Adrenal gland (tissue), 19 donors: ENCODE measurements at regions of chr19 and their contacts with region 1.

Region 1: GRCh38 chr19:6218491-6219162 is 61.1 kb downstream of the MLLT1 start:
- DNase-seq: peak; percentile 89 to 97 (median 90)
- H3K4me3 ChIP-seq: no peak overlapping the region
- H3K27ac ChIP-seq: no peak overlapping the region
- H3K4me1 ChIP-seq: peaks cover 34 to 51% of the 10 kb centered on the region in 2 donors
- H3K27me3 ChIP-seq: no peaks in the 10 kb centered on the region
- CTCF ChIP-seq: peak; percentile 96 to 99 (median 98)
- POLR2A ChIP-seq: no peak

Region 2: GRCh38 chr19:6279931-6280591 is 61.4 kb after region 1 on chr19 and contains the start of gene MLLT1:
- intact Hi-C with region 1: loop called in 1 of 2 experiments (anchors 5 kb)
- DNase-seq: peak; percentile 97 to 99 (median 98)
- H3K4me3 ChIP-seq: peak within 1 kb of the TSS; percentile 56 to 97 (median 71)
- H3K27ac ChIP-seq: peak within 1 kb of the TSS; percentile 4 to 95 (median 79)
- H3K4me1 ChIP-seq: peaks cover 0 to 40% of the 10 kb centered on the region in 2 donors
- H3K27me3 ChIP-seq: no peaks in the 10 kb centered on the region
- CTCF ChIP-seq: peak in 5 of 6 experiments; percentile 33 to 77 (median 52)
- POLR2A ChIP-seq: peak in 1 of 2 donors; percentile 42
- total RNA-seq, gene MLLT1: 9.3 to 66.3 (median 22.8) TPM

Region 3: GRCh38 chr19:6297202-6297601 is 78.6 kb after region 1 on chr19:
- intact Hi-C with region 1: loop called (anchors 2 to 5 kb)
- DNase-seq: no peak
- H3K4me3 ChIP-seq: no peak overlapping the region
- H3K27ac ChIP-seq: no peak overlapping the region
- H3K4me1 ChIP-seq: no peaks in the 10 kb centered on the region
- H3K27me3 ChIP-seq: no peaks in the 10 kb centered on the region
- CTCF ChIP-seq: no peak
- POLR2A ChIP-seq: no peak